Endothelial cell of umbilical vein (primary cell): ENCODE measurements at regions of chr20 and their contacts with region 1.

Region 1: DNA sequence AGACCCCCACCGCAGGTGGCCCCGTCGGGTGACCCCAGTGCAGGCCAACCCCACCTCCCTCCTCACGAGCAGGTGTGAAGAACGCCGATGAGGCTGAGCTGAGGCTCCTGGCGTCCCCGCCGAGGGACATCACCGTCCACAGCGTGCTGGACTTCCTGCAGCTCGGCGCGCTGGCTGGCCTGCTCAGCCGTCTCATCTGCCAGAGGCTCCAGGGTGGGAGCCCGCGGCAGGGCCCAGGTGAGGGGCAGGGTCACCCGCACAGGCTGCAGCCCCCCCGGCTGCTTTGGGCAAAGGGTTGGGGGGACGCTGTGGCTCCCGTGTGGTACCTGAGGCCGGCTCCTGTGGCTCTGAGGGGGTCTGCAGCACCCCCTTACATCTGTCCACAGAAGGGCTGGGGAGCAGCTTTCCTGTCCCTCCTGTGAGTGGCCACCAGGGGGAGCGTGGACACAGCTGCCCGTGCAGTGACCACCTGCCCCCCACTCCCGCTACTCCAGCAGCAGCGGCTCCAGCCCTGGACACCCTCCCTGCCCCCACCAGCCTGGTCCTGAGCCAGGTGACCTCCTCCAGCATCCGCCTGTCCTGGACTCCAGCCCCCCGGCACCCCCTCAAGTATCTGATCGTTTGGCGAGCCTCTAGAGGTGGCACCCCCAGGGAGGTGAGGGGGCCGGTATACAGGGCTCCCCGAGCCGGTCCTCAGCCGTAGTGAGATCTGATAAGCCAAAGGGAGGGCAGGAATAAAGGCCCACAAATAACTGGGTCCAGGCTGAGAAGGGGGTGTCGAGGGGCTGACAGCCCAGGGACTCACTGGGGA is 16.5 kb downstream of the COL20A1 start:
- DNase-seq: peak; percentile 19
- H3K4me3 ChIP-seq: no peak overlapping the region
- H3K27ac ChIP-seq: no peak overlapping the region
- H3K4me1 ChIP-seq: no peaks in the 10 kb centered on the region
- H3K27me3 ChIP-seq: no peaks in the 10 kb centered on the region
- CTCF ChIP-seq: peak; percentile 69 to 93
- POLR2A ChIP-seq: no peak

Region 2: GRCh38 chr20:63280929-63281545 is 28.4 kb before region 1 on chr20:
- CTCF ChIA-PET with region 1: interaction called, 13 read pairs
- POLR2A ChIA-PET with region 1: no interaction called
- dilution Hi-C with region 1: no loop called
- intact Hi-C with region 1: no loop called
- DNase-seq: no peak
- H3K4me3 ChIP-seq: no peak overlapping the region
- H3K27ac ChIP-seq: no peak overlapping the region
- H3K4me1 ChIP-seq: no peaks in the 10 kb centered on the region
- H3K27me3 ChIP-seq: no peaks in the 10 kb centered on the region
- CTCF ChIP-seq: peak in 1 of 2 donors; percentile 32
- POLR2A ChIP-seq: no peak

Region 3: DNA sequence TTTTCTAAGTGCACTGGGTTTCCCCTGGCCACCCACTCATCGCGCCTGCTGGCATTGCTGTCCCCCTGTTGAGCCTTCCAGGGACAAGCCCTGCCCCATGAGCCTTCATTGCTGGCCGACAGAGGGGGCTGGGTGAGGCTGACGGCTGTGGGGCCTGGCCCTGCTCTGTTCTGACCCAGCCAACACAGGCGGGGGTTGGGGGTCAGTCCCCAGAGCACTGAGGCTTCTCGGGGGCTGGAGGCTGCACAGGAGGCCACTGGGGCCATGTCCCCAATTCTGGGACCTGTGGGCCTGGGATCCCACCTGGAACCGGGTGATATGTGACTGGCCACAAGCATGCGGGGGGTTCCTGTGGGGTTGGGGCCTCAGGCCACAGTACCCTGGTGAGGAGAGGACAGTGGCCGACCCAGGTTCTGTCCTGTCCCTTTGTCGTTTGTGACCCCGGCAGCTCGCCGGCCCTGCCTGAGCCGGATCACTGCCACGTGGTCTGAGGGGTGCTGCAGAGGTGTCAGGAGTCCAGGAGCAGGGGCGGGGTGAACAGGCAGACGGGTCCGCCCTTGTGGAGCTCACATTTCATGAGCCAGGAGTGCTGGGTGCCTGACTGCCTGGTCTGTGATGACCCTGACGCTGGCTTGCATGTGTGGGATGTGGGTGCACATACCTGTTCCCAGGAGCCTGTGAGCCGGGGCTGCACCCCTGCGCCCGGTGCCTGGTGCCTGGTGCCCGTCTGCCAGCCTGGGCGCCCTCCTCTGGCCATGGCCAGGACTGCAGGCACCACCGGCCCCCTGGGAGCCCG is 18.6 kb before region 1 on chr20:
- CTCF ChIA-PET with region 1: interaction called, 45 read pairs
- POLR2A ChIA-PET with region 1: no interaction called
- dilution Hi-C with region 1: no loop called
- intact Hi-C with region 1: no loop called
- DNase-seq: peak; percentile 32
- H3K4me3 ChIP-seq: no peak overlapping the region
- H3K27ac ChIP-seq: no peak overlapping the region
- H3K4me1 ChIP-seq: no peaks in the 10 kb centered on the region
- H3K27me3 ChIP-seq: peaks cover 3 to 6% of the 10 kb centered on the region in 2 experiments
- CTCF ChIP-seq: peak; percentile 70 to 87
- POLR2A ChIP-seq: no peak